ENCODE measurements at regions of chr18 and their contacts with region 1.

Region 1: DNA sequence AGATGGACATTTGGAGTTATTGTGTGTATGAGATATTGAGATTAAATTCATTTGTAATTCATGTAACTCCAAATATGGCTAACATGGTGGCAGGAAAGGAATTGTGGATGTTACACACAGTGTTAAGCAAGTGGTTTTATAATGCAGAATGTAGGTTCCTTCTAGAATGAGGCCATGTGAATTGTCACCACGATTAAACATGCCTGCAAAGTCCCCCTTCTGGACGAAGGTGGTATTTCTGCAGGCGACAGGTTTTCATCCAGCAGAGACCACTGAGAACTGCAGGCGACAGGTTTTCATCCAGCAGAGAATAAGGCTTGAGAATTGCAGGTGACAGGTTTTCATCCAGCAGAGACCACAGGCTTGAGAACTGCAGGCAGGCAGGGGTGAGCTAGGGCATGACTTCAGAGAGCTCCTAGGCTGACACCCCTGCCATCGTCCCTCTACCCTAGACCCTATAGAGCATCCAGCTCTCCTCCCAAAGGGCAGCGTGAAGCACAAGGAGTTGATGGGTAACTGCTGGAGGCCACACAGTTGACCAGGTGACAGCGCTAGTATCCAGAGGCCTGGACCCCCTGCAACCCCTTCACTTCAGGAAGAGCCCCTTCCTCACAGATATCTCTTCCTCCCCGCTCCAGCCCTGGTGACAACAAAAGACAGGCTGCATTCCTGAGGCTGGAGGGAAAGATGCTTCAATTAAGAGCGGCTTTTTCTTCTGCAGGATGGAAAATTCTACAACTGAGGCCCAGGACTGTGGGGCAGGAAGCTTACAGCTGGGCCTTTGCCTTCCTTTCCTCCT is 175.8 kb downstream of the LOXHD1 start:
- DNase-seq: peak; percentile 64
- H3K4me3 ChIP-seq: no peak overlapping the region
- H3K27ac ChIP-seq: peak overlapping the region in 1 of 2 experiments; percentile 59; a peak in 2 of 4 replicates
- H3K4me1 ChIP-seq: peaks cover 7 to 9% of the 10 kb centered on the region in 2 experiments; a peak in 2 of 4 replicates
- H3K27me3 ChIP-seq: no peaks in the 10 kb centered on the region; the same call in 1 of the 2 replicates
- CTCF ChIP-seq: peak; percentile 67
- EP300 ChIP-seq: no peak
- RAD21 ChIP-seq: peak; percentile 77

Region 2: DNA sequence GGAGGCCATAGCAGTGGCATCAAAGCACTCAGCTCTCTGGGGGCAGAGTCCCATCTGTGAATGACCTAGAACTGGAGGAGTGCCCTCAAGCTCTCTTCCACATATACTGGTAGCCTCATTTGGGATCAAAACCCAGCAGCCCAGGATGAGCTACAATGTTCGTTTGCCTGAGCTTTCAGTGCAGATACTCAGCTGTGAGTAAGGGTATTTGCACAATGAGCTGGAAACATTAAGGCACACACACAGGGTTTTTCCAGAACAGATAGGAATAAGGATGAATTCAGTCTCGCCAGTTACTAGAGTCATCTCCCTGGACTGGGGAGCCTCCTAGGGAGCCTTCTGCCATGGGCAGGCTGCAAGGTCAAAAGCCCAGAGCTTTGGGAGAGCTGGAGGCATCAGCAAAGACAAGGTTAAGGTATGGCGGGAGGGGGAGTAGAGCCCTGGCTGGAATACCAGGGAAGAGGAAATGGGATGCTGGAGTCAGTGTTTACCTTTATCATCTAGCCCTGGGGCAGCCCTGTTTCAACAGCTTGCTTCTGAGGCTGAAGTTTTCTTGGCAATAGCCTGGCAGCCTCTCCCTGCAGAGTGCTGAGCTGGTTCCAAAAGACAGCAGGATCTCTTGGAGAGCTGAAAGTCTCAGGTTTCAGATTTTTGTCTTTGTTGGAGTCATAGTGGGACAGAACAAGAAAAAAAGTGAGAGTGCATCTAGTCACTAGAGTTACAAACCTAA is 11.9 kb before region 1 on chr18:
- CTCF ChIA-PET with region 1: interaction called, 22 read pairs
- POLR2A ChIA-PET with region 1: no interaction called
- DNase-seq: peak; percentile 61
- H3K4me3 ChIP-seq: no peak overlapping the region
- H3K27ac ChIP-seq: 0 out of 4 replicates have a peak overlapping the region, but pooled peaks of 1 of the 2 experiments have one; percentile 6
- H3K4me1 ChIP-seq: peaks cover 0 to 19% of the 10 kb centered on the region in 2 experiments; a peak in 1 of 4 replicates
- H3K27me3 ChIP-seq: no peaks in the 10 kb centered on the region; the same call in 1 of the 2 replicates
- CTCF ChIP-seq: no peak
- EP300 ChIP-seq: no peak
- RAD21 ChIP-seq: no peak

Region 3: GRCh38 chr18:46677611-46678010 is 196.4 kb after region 1 on chr18:
- CTCF ChIA-PET with region 1: no interaction called
- POLR2A ChIA-PET with region 1: no interaction called
- DNase-seq: peak; percentile 36
- H3K4me3 ChIP-seq: no peak overlapping the region
- H3K27ac ChIP-seq: no peak overlapping the region
- H3K4me1 ChIP-seq: no peaks in the 10 kb centered on the region; a peak in 1 of 4 replicates
- H3K27me3 ChIP-seq: no peaks in the 10 kb centered on the region
- CTCF ChIP-seq: 0 out of 2 replicates have a peak, but pooled peaks have one; percentile 8
- EP300 ChIP-seq: no peak
- RAD21 ChIP-seq: no peak